OCI-LY7 (cell line): ENCODE measurements at regions of chr4 and their contacts with region 1.

Region 1: DNA sequence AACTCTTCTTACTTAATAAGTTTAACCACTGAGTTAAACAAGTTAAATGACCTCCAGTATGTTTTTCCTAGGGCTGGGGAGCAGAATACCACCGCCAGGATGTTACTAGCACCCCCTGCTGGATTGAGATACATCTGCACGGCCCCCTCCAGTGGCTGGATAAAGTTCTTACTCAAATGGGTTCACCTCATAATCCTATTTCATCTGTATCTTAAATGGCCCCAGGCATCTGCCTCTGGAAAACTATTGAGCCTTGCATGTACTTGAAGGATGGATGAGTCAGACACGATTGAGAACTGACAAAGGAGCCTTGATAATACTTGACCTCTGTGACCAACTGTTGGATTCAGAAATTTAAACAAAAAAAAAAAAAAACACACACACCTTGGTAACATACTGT is 61.5 kb upstream of the MMAA start:
- DNase-seq: peak; percentile 79
- H3K4me3 ChIP-seq: no peak overlapping the region
- H3K27ac ChIP-seq: no peak overlapping the region
- H3K4me1 ChIP-seq: peaks cover 21% of the 10 kb centered on the region
- CTCF ChIP-seq: peak; percentile 99

Region 2: DNA sequence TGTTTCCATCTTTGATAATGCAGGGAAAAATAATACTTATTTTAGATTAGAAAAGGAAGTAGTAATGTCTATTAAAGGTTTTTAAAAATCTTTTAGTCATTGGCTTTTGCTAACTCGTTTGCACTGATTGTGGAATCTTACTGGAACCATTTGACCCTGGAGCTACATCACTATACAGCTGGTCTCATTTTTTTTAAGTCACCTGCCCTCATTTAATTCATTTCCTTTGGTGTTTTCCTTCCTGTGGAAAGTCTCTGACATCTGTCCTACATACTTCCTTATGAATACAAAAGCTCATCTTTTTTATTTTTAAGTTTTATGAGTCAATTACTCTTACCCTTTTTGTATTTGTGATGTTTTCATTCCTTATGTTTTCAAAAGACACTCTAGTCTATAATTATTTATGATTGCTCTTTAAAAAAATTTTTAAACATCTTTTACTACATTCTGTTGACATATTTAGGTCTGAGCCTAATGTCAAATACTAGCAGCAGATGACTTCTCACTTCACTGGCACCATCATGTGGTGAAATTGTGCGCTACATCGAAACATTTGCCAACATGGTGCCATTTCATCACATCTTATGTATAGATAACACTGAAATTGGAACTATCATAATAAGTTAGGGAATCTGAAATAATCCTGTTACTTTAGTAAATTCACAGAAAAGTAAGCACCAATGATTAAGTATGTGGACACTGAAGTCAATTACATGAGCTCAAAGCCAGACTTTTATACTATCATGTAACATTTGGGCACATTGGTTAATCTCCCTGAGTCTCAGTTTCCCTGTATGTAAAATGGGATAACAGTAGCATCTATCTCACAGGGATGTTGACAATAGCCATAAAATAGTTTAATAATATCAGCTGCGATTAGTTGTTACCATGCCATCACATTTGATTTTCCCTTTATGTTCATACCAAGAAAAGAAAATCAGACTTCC is 52.0 kb after region 1 on chr4:
- CTCF ChIA-PET with region 1: no interaction called
- POLR2A ChIA-PET with region 1: no interaction called
- intact Hi-C with region 1: loop called (anchors 2 kb)
- DNase-seq: peak; percentile 85
- H3K4me3 ChIP-seq: no peak overlapping the region
- H3K27ac ChIP-seq: peak overlapping the region; percentile 5
- H3K4me1 ChIP-seq: peaks cover 9% of the 10 kb centered on the region
- CTCF ChIP-seq: peak; percentile 99